KBM-7 (cell line): ENCODE measurements at regions of chr6 and their contacts with region 1.

Region 1: DNA sequence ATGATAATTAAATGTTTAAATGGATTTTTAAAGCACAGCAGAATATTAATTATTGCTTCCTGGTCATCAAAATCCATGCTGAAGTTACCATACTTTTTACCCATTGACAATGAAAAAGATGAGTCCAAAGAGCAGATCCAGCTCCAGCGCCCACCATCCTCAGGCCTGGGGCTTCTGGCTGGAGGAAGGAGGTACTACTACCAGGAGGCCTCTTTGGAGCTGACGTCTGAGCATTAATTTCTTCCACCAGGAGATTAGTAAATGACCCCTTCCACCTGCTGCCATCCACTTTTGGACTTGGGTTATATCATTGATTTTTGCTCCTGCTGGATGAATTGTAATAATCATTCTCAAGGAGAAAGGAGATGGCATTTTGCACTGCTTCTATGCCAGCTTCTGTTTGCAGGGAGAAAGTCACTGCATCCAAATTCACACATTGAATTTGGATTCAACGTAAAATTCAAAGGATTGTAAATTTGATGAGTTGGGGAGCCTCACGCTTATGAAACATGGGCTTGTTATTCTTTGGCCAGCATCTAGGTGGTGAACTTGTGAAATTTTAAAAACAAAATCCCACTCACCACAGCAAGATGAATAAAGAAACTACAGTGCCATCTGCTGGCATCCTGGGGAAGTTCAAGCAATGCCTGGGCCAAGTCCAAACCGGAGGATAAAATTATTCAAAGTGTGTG is 121.8 kb downstream of the SASH1 start:
- DNase-seq: peak; percentile 80

Region 2: DNA sequence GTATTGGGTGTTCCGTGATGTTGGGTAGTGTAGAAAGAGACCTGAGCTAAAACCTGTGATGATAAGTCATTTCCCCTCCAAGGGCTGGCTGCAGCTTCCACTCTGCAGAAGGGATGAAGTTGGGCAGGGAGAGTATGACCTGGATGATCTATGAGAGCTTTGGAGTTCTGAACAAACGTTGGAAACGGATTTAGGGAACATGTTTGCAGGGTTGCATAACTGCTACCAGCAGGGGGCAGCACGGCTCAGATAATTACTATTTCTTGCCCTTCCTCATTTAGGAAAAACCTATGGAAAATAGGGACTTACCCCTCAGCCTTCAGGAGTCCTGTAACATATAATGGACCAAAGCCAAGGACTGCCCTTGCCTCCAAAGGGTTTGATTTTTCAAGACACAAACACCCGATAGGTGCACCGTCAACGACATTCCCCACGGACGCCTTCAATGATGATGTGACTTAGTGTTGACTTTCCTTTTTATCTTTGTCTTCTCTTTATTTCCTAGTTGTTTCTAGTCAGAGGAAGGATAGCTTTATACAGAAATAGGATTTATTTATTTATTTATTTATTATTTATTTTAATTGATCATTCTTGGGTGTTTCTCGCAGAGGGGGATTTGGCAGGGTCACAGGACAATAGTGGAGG is 286.8 kb before region 1 on chr6:
- in situ Hi-C with region 1: loop called (anchors 25 kb)
- DNase-seq: peak; percentile 43